GM10248 (cell line): ENCODE measurements at regions of chr9 and their contacts with region 1.

Region 1: GRCh38 chr9:124771021-124771866 is at the start of gene NR6A1:
- DNase-seq: peak; percentile 97
- CTCF ChIP-seq: no peak

Region 2: DNA sequence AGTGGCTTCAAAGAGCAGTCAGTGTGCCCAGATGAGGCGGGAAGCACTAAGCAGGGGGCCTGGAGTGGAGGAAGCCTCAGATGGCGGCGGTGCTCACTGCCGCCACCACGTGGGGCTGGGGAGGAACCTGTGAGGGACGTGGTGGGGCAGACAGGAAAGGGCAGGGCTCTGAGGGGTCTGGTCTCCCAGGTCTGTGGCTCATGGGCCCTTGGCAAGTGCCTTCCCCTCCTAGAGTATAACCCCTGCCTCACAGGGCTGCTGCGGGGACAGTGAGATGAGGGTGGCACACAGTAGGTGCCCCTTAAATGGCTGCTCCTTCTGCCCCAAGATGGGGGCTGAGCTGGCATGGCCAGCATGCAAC is 290.6 kb before region 1 on chr9:
- CTCF ChIA-PET with region 1: no interaction called
- POLR2A ChIA-PET with region 1: no interaction called
- DNase-seq: peak; percentile 79
- CTCF ChIP-seq: peak; percentile 48

Region 3: DNA sequence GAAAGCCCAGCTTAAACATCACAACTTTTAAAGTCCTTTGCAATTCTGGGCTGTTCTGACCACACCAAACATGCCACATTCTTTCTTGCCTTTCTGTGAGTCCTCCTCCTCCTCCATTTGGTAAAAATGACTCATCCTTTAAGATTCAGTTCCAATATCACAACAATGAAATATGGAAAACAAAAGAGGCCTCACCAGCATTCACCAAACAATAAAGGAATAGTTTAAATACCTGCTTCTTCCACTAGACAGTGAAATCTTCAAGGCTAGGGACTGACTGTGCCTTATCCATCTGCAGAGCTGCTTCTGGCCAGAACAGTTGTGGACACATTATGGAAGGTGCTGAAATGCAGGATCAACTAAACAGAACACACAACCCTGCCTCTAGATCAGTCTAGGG is 36.1 kb before region 1 on chr9:
- CTCF ChIA-PET with region 1: no interaction called
- POLR2A ChIA-PET with region 1: no interaction called
- DNase-seq: no peak
- CTCF ChIP-seq: no peak

Region 4: GRCh38 chr9:124800306-124801259 is 29.3 kb after region 1 on chr9:
- CTCF ChIA-PET with region 1: interaction called, 28 read pairs
- POLR2A ChIA-PET with region 1: no interaction called
- DNase-seq: peak; percentile 61
- CTCF ChIP-seq: no peak

Region 5: DNA sequence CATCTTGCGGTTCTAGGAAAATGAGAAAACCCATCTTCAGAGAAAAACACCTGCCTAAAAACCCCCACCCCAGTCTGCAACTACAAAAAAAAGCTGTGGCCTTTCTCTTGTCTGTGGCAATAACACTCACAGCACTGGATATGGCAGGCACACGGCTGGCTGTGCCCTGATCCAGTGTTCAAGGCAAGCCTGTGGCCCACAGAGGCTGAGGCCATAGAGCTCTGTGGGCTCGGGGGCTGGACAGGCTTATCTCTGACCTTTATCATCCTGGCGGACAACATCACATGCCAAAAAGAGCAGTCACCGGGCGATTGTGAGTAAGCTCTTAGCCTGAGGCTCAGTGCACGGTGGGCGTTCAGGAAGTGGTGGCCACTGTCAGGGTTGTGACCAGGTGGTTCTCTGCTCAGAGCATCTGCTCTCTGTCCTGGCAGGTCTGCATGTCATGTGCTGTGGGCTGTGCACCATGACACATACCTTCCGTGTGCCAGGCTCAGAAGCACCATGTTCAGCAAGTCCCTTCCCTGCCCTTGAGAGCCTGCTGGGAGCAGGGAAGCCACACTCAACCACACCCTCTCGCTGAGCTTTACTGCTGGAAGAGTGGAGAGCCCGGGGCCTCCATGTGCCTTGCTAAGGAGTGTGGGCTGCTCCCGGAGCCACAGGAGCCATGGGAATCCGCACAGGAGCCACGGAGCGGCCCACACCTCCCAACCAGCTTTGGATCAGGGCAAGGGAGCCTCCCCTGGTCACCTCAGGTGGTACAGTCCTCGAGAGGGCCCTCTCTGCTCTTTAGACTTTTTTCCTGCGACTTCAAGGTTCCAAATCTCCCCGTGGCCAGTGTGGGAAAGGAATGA is 47.4 kb after region 1 on chr9:
- CTCF ChIA-PET with region 1: interaction called, 27 read pairs
- POLR2A ChIA-PET with region 1: no interaction called
- DNase-seq: no peak
- CTCF ChIP-seq: no peak

Region 6: DNA sequence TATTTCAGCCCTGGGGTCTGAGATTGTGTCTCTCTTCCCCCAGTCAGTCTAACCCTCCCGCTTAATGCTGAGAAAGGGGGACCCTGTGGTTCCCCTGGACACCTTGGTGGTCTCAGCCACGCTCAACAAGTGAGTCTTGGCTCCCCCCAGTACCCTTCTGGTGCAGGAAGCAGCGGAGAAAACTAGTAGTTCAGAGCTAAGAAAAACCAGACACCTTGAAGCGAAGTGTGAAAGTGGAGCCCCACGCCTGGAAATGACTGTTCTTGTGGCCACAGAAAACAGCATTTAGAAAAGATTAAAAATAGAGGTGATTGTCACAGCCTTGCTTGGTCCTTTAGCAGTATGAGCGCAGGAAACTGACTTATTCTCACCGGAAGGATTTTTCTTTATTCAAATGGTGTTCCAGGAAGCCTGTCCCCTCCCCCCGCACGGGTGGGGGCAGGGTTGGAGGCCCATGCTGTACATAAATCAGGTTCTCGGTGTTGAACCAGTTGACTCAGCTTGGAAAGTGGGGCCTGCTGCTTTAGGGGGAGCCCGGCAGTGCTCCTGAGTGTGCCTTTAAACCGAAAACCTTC is 98.8 kb after region 1 on chr9:
- CTCF ChIA-PET with region 1: interaction called, 24 read pairs
- POLR2A ChIA-PET with region 1: no interaction called
- DNase-seq: peak; percentile 69
- CTCF ChIP-seq: no peak

Region 7: DNA sequence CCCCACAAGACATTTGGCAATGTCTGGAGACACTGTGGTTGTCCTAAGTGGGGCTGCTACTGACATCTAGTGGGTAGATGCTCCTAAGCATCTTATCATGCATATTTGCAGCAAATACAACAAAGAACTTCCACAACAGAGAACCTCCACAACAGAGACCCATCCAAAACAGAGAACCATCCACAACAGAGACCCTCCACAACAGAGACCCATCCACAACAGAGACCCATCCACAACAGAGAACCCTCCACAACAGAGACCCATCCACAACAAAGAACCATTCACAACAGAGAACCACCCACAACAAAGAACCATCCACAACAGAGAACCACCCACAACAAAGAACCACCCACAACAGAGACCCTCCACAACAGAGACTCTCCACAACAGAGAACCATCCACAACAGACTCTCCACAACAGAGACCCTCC is 123.5 kb after region 1 on chr9:
- CTCF ChIA-PET with region 1: interaction called, 31 read pairs
- POLR2A ChIA-PET with region 1: no interaction called
- DNase-seq: no peak
- CTCF ChIP-seq: peak; percentile 59

Region 8: GRCh38 chr9:124941454-124942175 is 170.4 kb after region 1 on chr9:
- CTCF ChIA-PET with region 1: no interaction called
- POLR2A ChIA-PET with region 1: no interaction called
- DNase-seq: peak; percentile 32
- CTCF ChIP-seq: no peak

Region 9: GRCh38 chr9:125049212-125050049 is 278.2 kb after region 1 on chr9:
- CTCF ChIA-PET with region 1: no interaction called
- POLR2A ChIA-PET with region 1: no interaction called
- DNase-seq: no peak
- CTCF ChIP-seq: no peak